Adrenal gland (tissue), 19 donors: ENCODE measurements at regions of chr1 and their contacts with region 1.

Region 1: DNA sequence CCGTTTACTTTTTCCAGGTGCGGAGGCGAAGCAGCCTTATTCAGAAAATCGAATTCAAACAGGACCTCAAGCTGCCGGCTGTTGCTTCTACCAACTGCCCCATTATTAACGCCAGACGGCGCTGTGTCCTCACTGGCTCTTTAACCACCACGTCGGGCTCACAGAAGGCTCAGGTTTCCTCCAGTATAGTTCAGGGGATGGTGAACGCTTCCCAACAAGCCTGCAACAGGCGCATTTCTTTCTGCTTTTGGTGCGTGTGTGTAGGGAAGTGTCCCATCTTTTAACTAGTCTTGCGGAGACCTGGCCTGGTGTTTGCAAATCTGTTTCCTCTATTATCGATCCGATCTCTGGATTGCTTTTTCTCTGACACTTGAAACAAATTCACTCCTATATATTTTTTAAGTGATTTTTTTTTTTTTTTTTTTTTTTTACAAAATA is 791 bp upstream of the STUM start:
- DNase-seq: peak; percentile 76 to 93 (median 87)
- H3K4me3 ChIP-seq: peak overlapping the region in 1 of 4 donors; percentile 64
- H3K27ac ChIP-seq: no peak overlapping the region
- H3K4me1 ChIP-seq: peaks cover 18 to 21% of the 10 kb centered on the region in 2 donors
- H3K27me3 ChIP-seq: peaks cover 16% of the 10 kb centered on the region
- CTCF ChIP-seq: peak; percentile 83 to 91 (median 88)
- POLR2A ChIP-seq: peak in 1 of 2 donors; percentile 14

Region 2: DNA sequence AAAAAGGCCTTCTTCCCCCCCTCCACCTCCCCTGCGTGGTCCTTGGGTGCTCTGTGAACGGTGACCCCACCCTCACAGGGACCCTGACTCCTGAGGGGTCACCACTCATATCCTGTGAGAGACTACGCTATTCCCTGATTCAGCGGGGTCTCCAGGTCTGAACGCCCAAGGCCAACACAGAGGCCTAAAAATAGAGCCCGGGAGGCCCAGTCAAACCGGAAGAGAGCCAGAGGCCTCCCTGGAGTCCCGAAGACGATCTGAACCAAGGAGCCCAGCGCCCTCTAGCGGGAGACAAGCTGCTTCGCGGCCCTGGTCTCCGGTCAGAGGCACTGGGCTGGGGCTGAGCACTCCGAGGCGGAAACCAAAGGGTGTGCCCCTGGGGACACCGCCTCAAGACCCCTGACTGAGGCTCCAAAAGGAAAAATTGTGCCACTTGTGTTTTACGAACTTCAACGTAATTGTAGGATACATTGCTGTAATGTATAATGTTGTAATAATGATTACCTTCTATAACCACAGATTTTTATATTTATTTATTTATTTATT is 280.3 kb after region 1 on chr1:
- intact Hi-C with region 1: loop called in 1 of 2 experiments (anchors 10 kb)
- DNase-seq: peak; percentile 93 to 98 (median 96)
- H3K4me3 ChIP-seq: peak overlapping the region in 1 of 4 donors; percentile 16
- H3K27ac ChIP-seq: peak overlapping the region in 2 of 5 donors; percentile 51 to 62
- H3K4me1 ChIP-seq: peaks cover 0 to 12% of the 10 kb centered on the region in 2 donors
- H3K27me3 ChIP-seq: no peaks in the 10 kb centered on the region
- CTCF ChIP-seq: peak; percentile 84 to 96 (median 92)
- POLR2A ChIP-seq: no peak

Region 3: GRCh38 chr1:227049253-227049652 is 501.5 kb after region 1 on chr1:
- intact Hi-C with region 1: no loop called
- DNase-seq: no peak
- H3K4me3 ChIP-seq: no peak overlapping the region
- H3K27ac ChIP-seq: no peak overlapping the region
- H3K4me1 ChIP-seq: no peaks in the 10 kb centered on the region
- H3K27me3 ChIP-seq: no peaks in the 10 kb centered on the region
- CTCF ChIP-seq: no peak
- POLR2A ChIP-seq: no peak